Mucosa of descending colon (tissue), 3 donors: ENCODE measurements at regions of chr10 and their contacts with region 1.

Region 1: DNA sequence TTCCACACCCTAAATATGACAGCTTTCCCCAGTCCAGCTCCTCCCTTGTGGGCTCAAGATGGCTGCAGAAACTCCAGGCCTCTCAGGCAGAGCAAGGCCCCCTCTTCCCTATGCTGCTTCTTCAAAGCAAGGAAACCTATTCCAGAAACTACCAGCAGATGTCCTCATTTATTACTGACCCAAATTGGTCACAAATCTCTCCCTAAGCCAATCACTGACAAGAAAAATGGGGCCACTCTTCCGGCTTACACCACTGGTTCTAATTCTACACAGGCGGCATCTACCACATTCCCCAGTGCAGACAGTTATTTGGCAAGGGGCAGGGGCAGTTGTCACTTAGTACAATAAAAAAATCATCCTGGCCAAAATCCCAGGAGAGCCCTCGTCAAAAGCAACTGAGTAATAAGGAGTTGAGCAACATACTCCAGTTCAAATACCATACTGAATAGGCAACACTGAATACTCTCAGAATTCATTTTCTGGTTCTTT is 150.4 kb downstream of the SFMBT2 start:
- DNase-seq: peak in 1 of 3 donors; percentile 39
- ATAC-seq: peak; percentile 68
- H3K4me3 ChIP-seq: no peak overlapping the region
- H3K4me1 ChIP-seq: no peaks in the 10 kb centered on the region
- CTCF ChIP-seq: peak; percentile 21

Region 2: DNA sequence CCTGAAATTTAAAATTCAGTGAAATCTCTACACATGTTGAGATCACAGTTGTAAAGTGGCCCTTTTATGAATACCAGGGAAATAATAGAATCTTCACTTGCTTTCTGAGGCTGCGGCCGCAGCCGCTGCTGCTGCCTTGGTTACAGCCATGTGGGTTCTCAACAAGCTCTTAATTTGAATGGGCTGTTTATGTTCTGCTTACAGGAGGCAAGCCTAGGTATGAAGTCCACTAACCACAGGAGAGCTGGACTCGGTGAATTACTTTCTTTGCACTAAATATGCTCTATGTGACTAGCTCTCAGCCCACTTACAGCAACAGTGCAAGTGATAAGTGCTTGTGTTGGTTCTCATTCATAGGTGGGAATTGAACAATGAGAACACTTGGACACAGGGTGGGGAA is 260.4 kb before region 1 on chr10:
- intact Hi-C with region 1: no loop called
- DNase-seq: no peak
- ATAC-seq: peak; percentile 20
- H3K4me3 ChIP-seq: no peak overlapping the region
- H3K4me1 ChIP-seq: peaks cover 4% of the 10 kb centered on the region
- CTCF ChIP-seq: no peak

Region 3: GRCh38 chr10:7410862-7411670 is 150.6 kb after region 1 on chr10 and contains the start of gene SFMBT2:
- intact Hi-C with region 1: loop called (anchors 2 to 10 kb)
- DNase-seq: peak; percentile 43 to 68 (median 62)
- ATAC-seq: peak; percentile 62
- H3K4me3 ChIP-seq: peak within 1 kb of the TSS; percentile 32
- H3K4me1 ChIP-seq: peaks cover 3% of the 10 kb centered on the region
- CTCF ChIP-seq: no peak
- total RNA-seq, gene SFMBT2: 3.9 to 8.8 (median 5.7) TPM